Right cardiac atrium (tissue), 5 donors: ENCODE measurements at regions of chr15 and their contacts with region 1.

Region 1: DNA sequence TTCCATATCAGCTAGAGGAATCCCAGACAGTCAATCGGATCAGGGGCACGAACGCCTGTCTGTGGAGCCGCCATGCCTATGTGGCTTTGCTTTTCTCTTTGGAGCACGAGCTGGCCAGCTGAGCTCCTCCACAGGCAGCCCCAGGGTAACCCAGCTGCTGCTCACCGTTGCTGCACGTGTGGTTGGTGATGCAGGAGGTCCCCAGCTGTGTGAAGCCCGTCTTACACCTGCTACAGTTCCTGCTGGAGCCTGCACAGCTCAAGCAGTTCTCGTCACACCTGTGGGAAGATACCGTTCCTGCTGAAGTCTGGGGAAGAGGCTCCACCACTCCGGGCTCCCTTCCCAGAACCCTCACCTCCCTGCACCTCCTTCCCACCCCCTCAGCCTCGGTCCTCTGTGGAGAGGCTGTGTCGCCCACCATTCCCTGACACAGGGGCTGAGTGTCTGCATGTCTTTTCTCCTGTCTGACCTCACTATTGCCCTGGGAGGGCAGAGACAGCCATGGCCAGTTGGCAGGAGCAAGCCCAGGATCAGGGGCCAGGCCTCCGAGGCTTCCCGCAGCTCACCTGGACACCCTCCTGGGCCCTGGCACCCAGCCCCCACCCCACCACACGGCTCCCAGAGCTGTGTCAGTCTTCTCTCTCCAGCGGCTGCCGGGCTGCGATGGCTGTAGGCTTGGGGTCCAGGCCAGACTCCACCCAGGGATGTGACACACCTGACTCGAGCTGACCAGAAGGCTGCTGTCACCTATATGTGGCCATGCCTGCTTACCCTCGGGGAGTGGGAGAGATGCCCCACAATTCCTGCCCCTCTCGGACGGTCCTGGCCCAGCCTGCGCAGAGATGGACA is 12.2 kb upstream of the SNRPA1 start:
- DNase-seq: peak in 2 of 3 donors; percentile 22 to 48
- ATAC-seq: no peak
- H3K4me3 ChIP-seq: no peak overlapping the region
- H3K27ac ChIP-seq: no peak overlapping the region
- H3K4me1 ChIP-seq: no peaks in the 10 kb centered on the region
- H3K27me3 ChIP-seq: no peaks in the 10 kb centered on the region

Region 2: GRCh38 chr15:101115786-101116680 is 191.2 kb before region 1 on chr15:
- intact Hi-C with region 1: no loop called
- DNase-seq: peak in 2 of 3 donors; percentile 82
- ATAC-seq: peak; percentile 48 to 62
- H3K4me3 ChIP-seq: no peak overlapping the region
- H3K27ac ChIP-seq: no peak overlapping the region
- H3K4me1 ChIP-seq: peaks cover 3% of the 10 kb centered on the region
- H3K27me3 ChIP-seq: no peaks in the 10 kb centered on the region

Region 3: DNA sequence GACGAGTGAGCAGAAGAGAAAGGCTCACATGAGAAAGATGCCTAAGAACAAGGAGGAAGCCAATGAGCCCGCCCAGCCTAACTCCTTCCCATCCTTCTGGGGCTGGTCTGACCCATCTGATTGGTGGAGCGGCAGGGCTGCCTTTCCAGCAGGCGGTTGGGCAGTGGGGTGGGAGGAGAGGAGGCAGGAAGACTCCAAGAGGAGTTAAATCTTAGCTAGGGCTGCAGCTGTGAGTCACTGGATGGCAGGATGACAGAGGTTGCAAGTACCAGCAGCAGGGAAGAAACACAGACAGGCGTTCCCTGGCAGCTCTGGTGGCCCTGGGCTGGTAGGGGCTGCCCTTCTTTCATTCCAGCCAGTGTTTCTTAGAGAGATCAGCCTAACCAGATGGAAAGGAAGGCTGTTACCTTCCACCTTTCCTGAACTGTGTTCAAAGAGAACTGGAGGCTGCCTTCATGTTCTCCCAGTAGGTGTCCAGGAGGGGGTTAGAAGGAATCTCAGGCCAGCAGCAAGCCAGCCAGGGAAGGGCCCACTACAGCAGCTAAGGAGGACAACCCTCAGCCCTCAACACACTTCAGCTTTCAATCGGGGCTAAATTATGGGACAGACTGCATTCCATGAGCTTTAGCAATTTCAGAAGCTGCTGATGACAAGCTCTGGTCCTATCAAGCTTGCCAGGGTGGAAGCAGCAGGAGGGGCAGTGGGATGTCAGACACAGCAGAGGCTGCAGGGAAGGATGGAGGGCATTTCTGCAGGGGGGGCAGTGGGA is 105.7 kb before region 1 on chr15:
- intact Hi-C with region 1: no loop called
- DNase-seq: peak; percentile 95 to 96 (median 96)
- ATAC-seq: peak; percentile 95 to 98
- H3K4me3 ChIP-seq: no peak overlapping the region
- H3K27ac ChIP-seq: peak overlapping the region; percentile 65
- H3K4me1 ChIP-seq: peaks cover 21% of the 10 kb centered on the region
- H3K27me3 ChIP-seq: no peaks in the 10 kb centered on the region

Region 4: GRCh38 chr15:101501703-101502373 is 194.6 kb after region 1 on chr15:
- intact Hi-C with region 1: loop called in 3 of 4 experiments (anchors 5 to 10 kb)
- DNase-seq: peak in 2 of 3 donors; percentile 73 to 75
- ATAC-seq: peak; percentile 66 to 72
- H3K4me3 ChIP-seq: no peak overlapping the region
- H3K27ac ChIP-seq: no peak overlapping the region
- H3K4me1 ChIP-seq: no peaks in the 10 kb centered on the region
- H3K27me3 ChIP-seq: no peaks in the 10 kb centered on the region

Region 5: GRCh38 chr15:101641166-101641764 is 334.0 kb after region 1 on chr15:
- intact Hi-C with region 1: loop called in 2 of 4 experiments (anchors 5 kb)
- DNase-seq: peak; percentile 64 to 85 (median 74)
- ATAC-seq: peak; percentile 57 to 68
- H3K4me3 ChIP-seq: no peak overlapping the region
- H3K27ac ChIP-seq: no peak overlapping the region
- H3K4me1 ChIP-seq: no peaks in the 10 kb centered on the region
- H3K27me3 ChIP-seq: no peaks in the 10 kb centered on the region